ENCODE measurements at regions of chr9 and their contacts with region 1.

Region 1: GRCh38 chr9:116494815-116495634 is 192.1 kb upstream of the TRIM32 start:
- DNase-seq: peak; percentile 60 to 67 (median 63)
- ATAC-seq: peak; percentile 74
- H3K4me3 ChIP-seq: no peak overlapping the region
- H3K27ac ChIP-seq: no peak overlapping the region
- H3K4me1 ChIP-seq: no peaks in the 10 kb centered on the region
- H3K27me3 ChIP-seq: no peaks in the 10 kb centered on the region
- CTCF ChIP-seq: peak; percentile 51 to 73 (median 66)
- POLR2A ChIP-seq: no peak

Region 2: GRCh38 chr9:116163293-116164055 is 331.6 kb before region 1 on chr9:
- intact Hi-C with region 1: loop called (anchors 10 kb)
- DNase-seq: no peak
- ATAC-seq: no peak
- H3K4me3 ChIP-seq: no peak overlapping the region
- H3K27ac ChIP-seq: no peak overlapping the region
- H3K4me1 ChIP-seq: peaks cover 13% of the 10 kb centered on the region
- H3K27me3 ChIP-seq: no peaks in the 10 kb centered on the region
- CTCF ChIP-seq: peak in 5 of 7 experiments; percentile 14 to 39 (median 35)
- POLR2A ChIP-seq: no peak

Region 3: DNA sequence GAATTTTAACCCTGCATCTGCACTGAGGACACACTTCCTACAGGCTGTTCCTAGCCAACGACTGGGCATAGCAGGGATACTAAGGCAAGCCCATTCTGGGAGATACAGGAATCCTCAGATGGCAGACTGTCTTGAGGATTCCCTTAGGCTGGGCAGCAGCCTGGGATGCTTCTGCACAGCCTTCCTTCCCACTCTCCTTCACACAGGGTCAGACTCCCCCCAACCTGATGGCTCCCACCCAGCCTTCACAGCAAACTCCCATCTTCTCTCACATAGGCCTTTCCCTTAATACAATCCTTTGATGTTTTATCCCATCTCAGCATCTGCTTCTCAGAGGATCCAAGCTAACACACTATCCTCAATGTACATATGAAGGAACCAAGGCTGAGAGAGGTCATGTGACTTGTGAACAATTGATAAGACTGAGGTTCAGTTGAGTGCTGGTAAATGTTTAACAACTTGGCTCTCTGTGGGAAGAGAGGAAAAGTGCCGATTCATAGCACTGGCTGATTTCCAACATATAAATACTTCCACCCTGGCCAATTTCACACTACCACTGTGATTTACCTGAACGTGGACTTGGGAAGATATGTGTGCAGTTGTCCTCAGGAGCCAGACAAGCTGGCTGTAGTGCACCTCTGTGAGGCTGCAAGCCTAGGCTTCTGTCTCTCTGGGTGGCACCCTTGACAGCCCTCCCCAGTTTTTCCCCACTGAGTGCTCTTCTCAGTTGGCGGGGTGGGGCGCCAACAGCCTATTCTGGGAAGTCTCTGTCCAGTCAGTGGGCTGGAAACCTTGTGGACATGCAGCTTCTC is 71.9 kb after region 1 on chr9:
- intact Hi-C with region 1: loop called (anchors 10 kb)
- DNase-seq: peak; percentile 41 to 74 (median 59)
- ATAC-seq: peak; percentile 94
- H3K4me3 ChIP-seq: no peak overlapping the region
- H3K27ac ChIP-seq: peak overlapping the region; percentile 11 to 68 (median 52)
- H3K4me1 ChIP-seq: peaks cover 45% of the 10 kb centered on the region
- H3K27me3 ChIP-seq: no peaks in the 10 kb centered on the region
- CTCF ChIP-seq: no peak
- POLR2A ChIP-seq: peak in 1 of 3 donors; percentile 26

Measured in body of pancreas (tissue), 4 donors.